MCF 10A (cell line): ENCODE measurements at regions of chr13 and their contacts with region 1.

Region 1: GRCh38 chr13:20924758-20925394 is 22.3 kb upstream of the XPO4 start:
- DNase-seq: peak; percentile 74
- H3K4me3 Mint-ChIP-seq: no peak overlapping the region
- H3K27ac Mint-ChIP-seq: no peak overlapping the region
- H3K4me1 Mint-ChIP-seq: no peaks in the 10 kb centered on the region
- H3K27me3 Mint-ChIP-seq: no peaks in the 10 kb centered on the region
- CTCF ChIP-seq: peak; percentile 76

Region 2: DNA sequence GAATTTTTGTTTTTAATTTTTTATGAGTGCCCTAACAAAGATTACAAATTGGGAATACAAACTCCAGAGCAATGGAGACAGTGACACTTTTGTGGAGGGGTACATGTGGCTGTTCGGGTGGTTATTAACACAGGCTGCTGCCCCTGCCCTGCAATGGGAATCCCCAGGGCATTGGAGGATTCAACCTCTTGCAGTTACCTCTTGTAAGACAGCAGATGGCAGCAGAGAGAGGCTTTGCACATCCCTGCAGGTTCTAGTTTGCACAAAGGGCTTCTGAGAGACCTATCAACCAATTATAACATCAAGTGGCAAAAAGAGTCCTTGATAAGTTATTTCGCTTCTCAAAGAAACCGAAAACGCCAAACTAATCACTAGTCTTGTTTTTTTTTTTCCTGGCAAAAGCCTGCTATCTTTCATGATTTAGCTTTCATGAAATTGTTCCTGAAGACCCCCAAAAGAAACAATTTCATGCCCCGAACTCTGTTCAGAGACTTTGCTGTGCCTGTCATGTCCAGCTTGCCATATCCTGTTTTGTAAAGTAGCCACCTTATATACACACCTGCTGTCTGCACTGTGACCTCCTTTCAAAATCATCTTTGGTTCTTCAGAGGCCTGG is 742.5 kb before region 1 on chr13:
- CTCF ChIA-PET with region 1: interaction called, 5 read pairs
- POLR2A ChIA-PET with region 1: no interaction called
- intact Hi-C with region 1: loop called (anchors 1 kb)
- DNase-seq: peak; percentile 78
- H3K4me3 Mint-ChIP-seq: no peak overlapping the region
- H3K27ac Mint-ChIP-seq: no peak overlapping the region
- H3K4me1 Mint-ChIP-seq: peaks cover 7% of the 10 kb centered on the region
- H3K27me3 Mint-ChIP-seq: no peaks in the 10 kb centered on the region
- CTCF ChIP-seq: peak; percentile 79

Region 3: DNA sequence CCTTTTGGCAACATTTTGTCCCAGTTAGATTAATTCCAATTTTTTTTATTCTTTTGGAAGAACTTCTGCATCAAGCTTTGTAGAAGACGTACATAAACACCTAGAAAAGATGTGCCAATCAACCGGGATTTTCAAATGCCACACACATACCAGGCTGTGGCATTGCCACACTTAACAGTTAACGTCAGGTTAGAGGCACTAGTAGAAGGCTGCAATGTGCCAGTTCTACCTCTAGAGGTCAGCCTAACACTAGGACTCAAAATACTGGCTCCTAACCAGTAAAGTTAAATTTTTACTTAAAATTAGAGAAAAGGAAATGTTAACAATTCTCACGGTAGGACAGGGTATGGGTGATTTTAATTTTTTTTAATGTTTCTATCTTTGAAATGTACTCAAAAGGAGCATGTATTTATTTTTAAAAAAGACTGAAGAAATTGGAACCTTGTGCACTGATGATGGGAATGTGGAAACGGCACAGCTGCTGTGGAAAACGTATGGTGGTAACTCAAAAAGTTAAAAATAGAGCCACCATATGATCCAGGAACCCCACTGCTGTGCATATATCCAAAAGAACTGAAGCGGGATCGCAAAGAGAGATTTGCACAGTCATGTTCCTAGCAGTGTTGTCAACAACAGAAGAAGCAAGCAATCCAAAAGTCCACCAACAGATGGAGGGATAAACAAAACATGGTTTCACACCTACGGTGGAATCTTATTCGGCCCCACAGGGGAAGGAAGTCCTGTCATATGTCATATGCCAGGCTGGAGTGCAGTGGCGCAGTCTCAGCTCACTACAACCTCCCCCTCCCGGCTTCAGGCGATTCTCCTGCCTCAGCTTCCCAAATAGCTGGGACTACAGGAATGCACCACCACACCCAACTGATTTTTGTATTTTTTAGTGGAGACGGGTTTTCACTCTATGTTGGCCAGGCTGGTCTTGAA is 429.5 kb before region 1 on chr13:
- CTCF ChIA-PET with region 1: interaction called, 76 read pairs
- POLR2A ChIA-PET with region 1: interaction called, 3 read pairs
- intact Hi-C with region 1: loop called (anchors 1 kb)
- DNase-seq: peak; percentile 77
- H3K4me3 Mint-ChIP-seq: no peak overlapping the region
- H3K27ac Mint-ChIP-seq: no peak overlapping the region
- H3K4me1 Mint-ChIP-seq: peaks cover 13% of the 10 kb centered on the region
- H3K27me3 Mint-ChIP-seq: no peaks in the 10 kb centered on the region
- CTCF ChIP-seq: peak; percentile 91

Region 4: GRCh38 chr13:20713751-20714150 is 211.1 kb before region 1 on chr13:
- CTCF ChIA-PET with region 1: interaction called, 3 read pairs
- POLR2A ChIA-PET with region 1: no interaction called
- intact Hi-C with region 1: loop called (anchors 1 kb)
- DNase-seq: no peak
- H3K4me3 Mint-ChIP-seq: no peak overlapping the region
- H3K27ac Mint-ChIP-seq: no peak overlapping the region
- H3K4me1 Mint-ChIP-seq: peaks cover 19% of the 10 kb centered on the region
- H3K27me3 Mint-ChIP-seq: no peaks in the 10 kb centered on the region
- CTCF ChIP-seq: no peak

Region 5: DNA sequence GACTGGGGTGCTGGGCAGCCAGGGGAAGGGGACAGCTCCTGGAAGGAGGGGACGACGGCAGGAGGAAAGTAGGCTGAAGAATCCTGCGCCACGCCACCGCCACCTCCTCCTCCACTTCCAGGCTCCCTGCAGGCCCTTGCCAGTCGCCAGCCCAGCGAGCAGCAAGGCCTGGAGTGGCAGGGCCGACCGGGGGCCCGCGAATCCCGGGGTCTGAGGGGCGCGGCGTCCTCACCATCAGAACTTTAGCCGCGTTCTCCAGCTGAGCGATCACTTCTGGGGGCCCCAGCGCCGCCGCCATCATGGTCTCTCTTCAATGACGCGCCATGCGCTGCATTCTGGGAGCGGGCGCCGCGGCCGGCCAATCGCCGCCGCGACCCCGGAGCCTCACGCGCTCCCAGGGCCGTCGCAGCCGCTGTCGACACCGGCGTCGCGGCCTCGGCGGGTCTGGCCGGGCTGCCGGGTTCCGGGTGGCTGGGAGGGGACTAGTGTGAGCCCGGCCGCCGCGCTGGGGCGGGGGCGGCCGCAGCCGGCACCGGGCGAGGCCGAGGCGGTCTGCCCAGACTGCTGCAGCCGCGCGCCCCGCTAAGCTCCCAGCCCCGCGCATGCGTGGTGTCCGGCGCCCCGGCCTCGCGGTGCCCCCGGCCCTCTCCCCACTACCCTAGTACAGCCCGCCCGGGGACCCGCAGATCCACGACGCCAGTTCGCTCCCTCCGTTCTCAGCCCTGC is 22.3 kb before region 1 on chr13 and contains the start of gene XPO4:
- CTCF ChIA-PET with region 1: interaction called, 20 read pairs
- POLR2A ChIA-PET with region 1: interaction called, 11 read pairs
- intact Hi-C with region 1: no loop called
- DNase-seq: peak; percentile 77
- H3K4me3 Mint-ChIP-seq: peak within 1 kb of the TSS; percentile 94
- H3K27ac Mint-ChIP-seq: peak within 1 kb of the TSS; percentile 94
- H3K4me1 Mint-ChIP-seq: peaks cover 5% of the 10 kb centered on the region
- H3K27me3 Mint-ChIP-seq: no peaks in the 10 kb centered on the region
- CTCF ChIP-seq: no peak
- total RNA-seq, gene XPO4: 22.5 and 25.8 TPM in 2 replicates